ENCODE measurements at regions of chr1 and their contacts with region 1.

Region 1: DNA sequence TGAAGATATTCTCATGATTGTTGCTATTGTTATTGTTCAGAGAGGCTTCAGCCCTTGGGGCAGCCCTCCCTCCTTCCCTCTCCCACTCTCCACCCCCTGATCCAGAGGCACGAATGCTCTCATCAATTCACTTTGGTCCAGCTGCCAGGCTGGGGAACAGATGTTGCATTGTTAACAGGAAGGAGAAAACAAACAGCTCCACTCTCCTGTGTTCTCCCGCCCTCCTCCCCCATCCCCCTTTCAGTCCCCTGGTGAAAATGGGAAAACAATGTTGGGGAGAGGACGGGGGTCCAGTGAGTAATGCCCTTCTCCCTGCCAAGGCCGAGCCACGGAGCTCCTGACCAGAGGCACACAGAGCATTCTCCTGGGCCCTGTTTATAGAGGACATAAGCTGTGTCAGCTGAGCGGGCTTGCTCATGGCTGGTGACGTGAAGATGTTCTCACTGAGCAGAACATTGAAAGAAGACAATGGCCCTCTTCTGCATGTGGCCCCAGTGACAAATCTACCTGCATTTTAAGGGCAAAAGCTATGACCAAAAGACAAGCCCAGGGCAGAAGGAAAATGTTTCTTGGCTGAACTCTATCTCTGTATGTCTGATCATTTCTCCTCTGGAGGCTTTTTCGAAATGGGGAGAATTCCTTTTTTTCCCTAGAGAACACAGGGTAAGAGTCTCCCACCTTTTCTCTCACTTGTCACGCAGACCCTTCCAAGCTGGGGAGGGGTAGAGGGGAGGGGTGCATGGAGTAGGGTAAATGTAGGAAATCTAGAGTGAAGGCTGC is 111.7 kb downstream of the GLUL start:
- DNase-seq: peak; percentile 18 to 97 (median 90)
- H3K4me3 ChIP-seq: peak overlapping the region in 3 of 59 donors; percentile 19 to 36 (median 28)
- H3K27ac ChIP-seq: peak overlapping the region in 58 of 59 donors; percentile 58 to 99 (median 96)
- H3K27me3 ChIP-seq: no peaks in the 10 kb centered on the region
- CTCF ChIP-seq: peak in 7 of 56 donors; percentile 4 to 37 (median 21)

Region 2: GRCh38 chr1:182084487-182085316 is 195.2 kb before region 1 on chr1:
- intact Hi-C with region 1: loop called (anchors 5 to 10 kb)
- DNase-seq: peak; percentile 61 to 96 (median 90)
- H3K4me3 ChIP-seq: peak overlapping the region in 13 of 59 donors; percentile 1 to 37 (median 9)
- H3K27ac ChIP-seq: peak overlapping the region in 55 of 59 donors; percentile 17 to 88 (median 71)
- H3K27me3 ChIP-seq: no peaks in the 10 kb centered on the region
- CTCF ChIP-seq: peak; percentile 77 to 99 (median 90)

Region 3: GRCh38 chr1:182107215-182107614 is 172.7 kb before region 1 on chr1:
- intact Hi-C with region 1: no loop called
- DNase-seq: no peak
- H3K4me3 ChIP-seq: no peak overlapping the region
- H3K27ac ChIP-seq: no peak overlapping the region
- H3K27me3 ChIP-seq: peaks cover 0 to 5% (median 0%) of the 10 kb centered on the region in 45 donors
- CTCF ChIP-seq: no peak

Region 4: GRCh38 chr1:182122256-182122912 is 157.5 kb before region 1 on chr1:
- intact Hi-C with region 1: no loop called
- DNase-seq: no peak
- H3K4me3 ChIP-seq: no peak overlapping the region
- H3K27ac ChIP-seq: peak overlapping the region in 54 of 59 donors; percentile 8 to 95 (median 84)
- H3K27me3 ChIP-seq: no peaks in the 10 kb centered on the region
- CTCF ChIP-seq: no peak

Region 5: GRCh38 chr1:182143154-182143657 is 136.7 kb before region 1 on chr1:
- intact Hi-C with region 1: loop called (anchors 2 kb)
- DNase-seq: peak; percentile 86 to 96 (median 92)
- H3K4me3 ChIP-seq: peak overlapping the region in 2 of 59 donors; percentile 17 to 19
- H3K27ac ChIP-seq: peak overlapping the region; percentile 82 to 98 (median 94)
- H3K27me3 ChIP-seq: no peaks in the 10 kb centered on the region
- CTCF ChIP-seq: peak; percentile 92 to 99 (median 97)

Region 6: GRCh38 chr1:182301467-182302198 is 21.7 kb after region 1 on chr1:
- intact Hi-C with region 1: loop called in 1 of 2 experiments (anchors 2 kb)
- DNase-seq: peak in 6 of 10 donors; percentile 27 to 67 (median 52)
- H3K4me3 ChIP-seq: peak overlapping the region in 1 of 59 donors; percentile 1
- H3K27ac ChIP-seq: peak overlapping the region; percentile 22 to 94 (median 86)
- H3K27me3 ChIP-seq: no peaks in the 10 kb centered on the region
- CTCF ChIP-seq: peak in 51 of 56 donors; percentile 25 to 72 (median 47)

Region 7: GRCh38 chr1:182397771-182398393 is 118.0 kb after region 1 on chr1:
- intact Hi-C with region 1: loop called in 1 of 2 experiments (anchors 1 kb)
- DNase-seq: no peak
- H3K4me3 ChIP-seq: no peak overlapping the region
- H3K27ac ChIP-seq: peak overlapping the region in 12 of 59 donors; percentile 9 to 99 (median 80)
- H3K27me3 ChIP-seq: no peaks in the 10 kb centered on the region
- CTCF ChIP-seq: no peak

Measured in dorsolateral prefrontal cortex (tissue), 120 donors.